IMR-90 (cell line): ENCODE measurements at regions of chr1 and their contacts with region 1.

Region 1: DNA sequence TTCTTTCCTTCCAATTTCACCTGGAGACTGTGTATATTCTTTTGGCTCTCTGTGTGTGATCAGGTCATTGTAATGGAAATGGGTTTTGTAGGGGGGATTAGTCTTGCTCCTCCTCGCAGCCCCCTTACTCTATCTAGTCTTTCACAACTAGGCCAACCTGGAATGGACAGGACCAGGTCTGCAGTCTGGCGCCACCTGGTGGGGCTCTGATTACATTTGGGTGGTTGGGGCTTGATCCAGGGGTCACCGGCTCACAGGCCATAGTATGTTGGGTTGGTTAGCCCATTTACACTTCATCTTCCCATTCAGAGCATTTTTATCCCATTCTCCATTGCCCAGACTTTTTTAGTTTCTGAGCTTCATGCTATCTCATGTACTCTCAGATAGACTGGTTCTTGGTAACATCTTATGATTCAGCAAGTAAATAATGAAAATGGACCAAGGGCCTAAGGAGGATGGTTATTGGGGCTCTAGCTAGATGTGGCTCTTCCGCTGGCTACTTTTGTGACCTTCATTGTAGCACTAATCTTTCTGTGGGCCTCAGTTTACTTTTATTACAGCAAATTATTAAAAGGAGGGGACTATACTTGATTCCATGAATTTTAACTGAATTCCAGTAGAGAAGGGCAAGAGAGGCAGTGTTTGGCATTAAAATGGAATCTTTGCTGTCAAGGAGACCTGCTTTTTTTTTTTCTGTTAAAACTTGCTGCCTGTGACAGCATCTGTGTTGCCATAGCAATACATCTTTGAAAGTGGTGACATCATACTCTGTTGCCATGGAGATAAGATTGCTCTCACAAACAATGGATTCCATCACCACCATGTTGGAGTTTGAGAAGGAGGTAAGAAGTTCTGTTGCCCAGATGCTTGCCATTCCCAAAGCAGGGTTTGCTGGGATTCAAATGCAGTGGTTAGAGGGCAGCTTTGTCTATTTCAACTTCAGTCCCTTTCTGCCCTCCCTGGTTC is 150.1 kb downstream of the PLXNA2 start:
- DNase-seq: peak; percentile 58
- ATAC-seq: peak; percentile 64
- H3K4me3 ChIP-seq: no peak overlapping the region
- H3K27ac ChIP-seq: no peak overlapping the region
- H3K4me1 ChIP-seq: peaks cover 7% of the 10 kb centered on the region; the same call in 1 of the 2 replicates
- H3K27me3 ChIP-seq: no peaks in the 10 kb centered on the region
- CTCF ChIP-seq: peak; percentile 60
- POLR2A ChIP-seq: no peak
- RAD21 ChIP-seq: peak; percentile 54

Region 2: DNA sequence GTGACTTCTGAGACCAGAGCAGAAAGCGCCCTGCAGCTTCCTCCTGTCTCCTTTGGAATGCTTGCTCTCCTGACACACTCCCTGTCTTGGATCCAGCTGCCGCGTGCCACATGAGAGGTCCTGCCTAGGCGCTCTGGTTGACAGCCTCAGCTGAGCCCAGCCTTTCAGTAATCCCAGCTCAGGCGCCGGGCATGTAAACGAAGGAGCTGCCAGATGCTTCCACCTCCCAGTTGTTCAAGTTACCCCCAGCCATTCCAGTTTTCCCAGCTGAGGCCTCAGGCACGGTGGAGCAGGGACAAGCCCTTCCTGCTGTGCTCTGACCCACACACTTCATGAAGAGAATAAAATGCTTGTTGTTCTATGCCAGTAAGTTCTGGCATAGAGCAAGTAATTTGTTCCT is 168.8 kb before region 1 on chr1:
- CTCF ChIA-PET with region 1: no interaction called
- POLR2A ChIA-PET with region 1: no interaction called
- dilution Hi-C with region 1: no loop called
- in situ Hi-C with region 1: no loop called
- intact Hi-C with region 1: no loop called
- DNase-seq: no peak
- ATAC-seq: peak; percentile 49
- H3K4me3 ChIP-seq: no peak overlapping the region
- H3K27ac ChIP-seq: no peak overlapping the region
- H3K4me1 ChIP-seq: peaks cover 2% of the 10 kb centered on the region; the same call in 1 of the 2 replicates
- H3K27me3 ChIP-seq: peaks cover 26% of the 10 kb centered on the region
- CTCF ChIP-seq: no peak
- POLR2A ChIP-seq: no peak
- RAD21 ChIP-seq: no peak

Region 3: DNA sequence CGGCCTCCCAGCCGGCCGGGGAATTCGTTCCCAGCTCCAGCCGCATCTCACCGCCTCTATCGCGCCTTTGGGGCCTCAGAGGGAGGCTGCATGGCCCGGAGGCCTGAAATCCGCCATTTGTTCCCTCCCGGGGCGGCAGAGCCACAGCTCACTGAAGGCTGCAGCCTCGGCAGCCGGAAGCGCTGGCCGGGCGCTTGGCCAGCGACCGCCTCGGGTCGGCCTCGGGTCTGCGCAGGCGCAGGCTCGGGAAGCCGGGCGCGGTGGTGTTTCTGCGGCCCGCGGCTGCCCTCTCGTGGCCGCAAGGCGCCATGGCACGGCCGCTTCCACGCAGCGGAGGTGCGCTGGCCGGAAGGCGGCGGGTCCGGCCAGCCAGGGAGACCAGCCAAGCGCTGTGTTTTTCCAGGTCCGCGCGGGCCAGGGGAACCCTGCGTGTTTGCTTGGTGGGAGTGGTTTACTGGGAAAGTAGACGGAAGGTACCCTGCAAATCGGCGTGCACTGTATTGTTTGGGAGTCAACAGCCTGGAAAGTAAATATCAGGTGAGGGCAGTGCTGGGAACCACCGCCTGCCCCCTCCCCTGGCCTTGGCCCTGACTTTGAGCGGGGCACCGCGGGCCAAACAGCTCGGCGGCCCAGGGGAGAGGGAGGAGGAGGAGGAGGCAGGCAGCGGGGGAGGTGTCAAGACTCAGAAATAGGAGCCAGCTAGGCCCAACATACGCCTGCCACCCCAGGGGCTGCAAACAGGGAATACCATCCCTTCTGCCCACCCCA is 130.4 kb before region 1 on chr1:
- CTCF ChIA-PET with region 1: no interaction called
- POLR2A ChIA-PET with region 1: no interaction called
- dilution Hi-C with region 1: no loop called
- in situ Hi-C with region 1: no loop called
- intact Hi-C with region 1: no loop called
- DNase-seq: peak; percentile 75
- ATAC-seq: peak; percentile 91
- H3K4me3 ChIP-seq: peak overlapping the region; percentile 45
- H3K27ac ChIP-seq: peak overlapping the region; percentile 66
- H3K4me1 ChIP-seq: peaks cover 3% of the 10 kb centered on the region
- H3K27me3 ChIP-seq: peaks cover 3% of the 10 kb centered on the region; the same call in 1 of the 2 replicates
- CTCF ChIP-seq: peak; percentile 100
- POLR2A ChIP-seq: peak; percentile 34
- RAD21 ChIP-seq: peak; percentile 98

Region 4: DNA sequence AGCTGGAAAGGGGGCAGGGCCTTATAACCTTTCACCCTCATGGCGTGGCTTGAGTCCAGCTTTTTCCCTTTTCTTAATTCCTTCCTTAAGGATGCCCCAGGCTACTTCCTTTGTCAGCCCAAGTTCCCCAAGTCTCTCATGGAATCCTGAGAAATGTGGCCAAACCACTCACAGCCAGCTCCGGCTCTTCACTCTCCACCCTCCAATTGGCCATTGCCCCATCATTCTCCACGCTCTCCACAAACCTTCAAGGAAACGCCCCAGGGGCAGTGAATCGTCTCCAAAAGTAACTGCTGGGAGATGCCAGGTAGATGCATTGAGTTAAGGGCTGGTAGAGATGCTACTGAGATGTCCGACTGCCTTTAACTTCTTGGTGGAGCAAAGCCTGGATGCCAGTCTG is 69.6 kb before region 1 on chr1:
- CTCF ChIA-PET with region 1: interaction called, 11 read pairs
- POLR2A ChIA-PET with region 1: no interaction called
- dilution Hi-C with region 1: no loop called
- in situ Hi-C with region 1: loop called (anchors 5 kb)
- intact Hi-C with region 1: loop called (anchors 1 kb)
- DNase-seq: no peak
- ATAC-seq: no peak
- H3K4me3 ChIP-seq: no peak overlapping the region
- H3K27ac ChIP-seq: no peak overlapping the region
- H3K4me1 ChIP-seq: no peaks in the 10 kb centered on the region; the same call in 1 of the 2 replicates
- H3K27me3 ChIP-seq: no peaks in the 10 kb centered on the region
- CTCF ChIP-seq: no peak
- POLR2A ChIP-seq: no peak
- RAD21 ChIP-seq: no peak